ENCODE measurements at regions of chr3 and their contacts with region 1.

Region 1: GRCh38 chr3:58491506-58492402 is at the start of gene KCTD6:
- DNase-seq: peak; percentile 93 to 95 (median 95)
- H3K4me3 ChIP-seq: peak within 1 kb of the TSS; percentile 69 to 92 (median 90)
- H3K4me3 Mint-ChIP-seq: peak within 1 kb of the TSS; percentile 94 to 99
- H3K27ac ChIP-seq: peak within 1 kb of the TSS; percentile 47 to 85
- H3K27ac Mint-ChIP-seq: peak within 1 kb of the TSS; percentile 88 to 98 (median 92)
- H3K4me1 ChIP-seq: peaks cover 41 to 66% of the 10 kb centered on the region in 2 donors
- H3K4me1 Mint-ChIP-seq: peaks cover 74% of the 10 kb centered on the region
- H3K27me3 ChIP-seq: no peaks in the 10 kb centered on the region
- H3K27me3 Mint-ChIP-seq: peaks cover 0 to 1% (median 1%) of the 10 kb centered on the region in 3 donors
- CTCF ChIP-seq: peak; percentile 60
- polyA plus RNA-seq, gene KCTD6: 11.3 to 18.9 (median 11.9) TPM

Region 2: GRCh38 chr3:58414538-58415197 is 77.1 kb before region 1 on chr3:
- intact Hi-C with region 1: no loop called
- DNase-seq: peak; percentile 46 to 58 (median 47)
- H3K4me3 ChIP-seq: no peak overlapping the region
- H3K4me3 Mint-ChIP-seq: no peak overlapping the region
- H3K27ac ChIP-seq: peak overlapping the region in 1 of 2 donors; percentile 53
- H3K27ac Mint-ChIP-seq: peak overlapping the region in 2 of 7 donors; percentile 3 to 82
- H3K4me1 ChIP-seq: peaks cover 0 to 3% of the 10 kb centered on the region in 2 donors
- H3K4me1 Mint-ChIP-seq: peaks cover 11% of the 10 kb centered on the region
- H3K27me3 ChIP-seq: no peaks in the 10 kb centered on the region
- H3K27me3 Mint-ChIP-seq: peaks cover 0 to 1% (median 0%) of the 10 kb centered on the region in 3 donors
- CTCF ChIP-seq: peak; percentile 74

Region 3: DNA sequence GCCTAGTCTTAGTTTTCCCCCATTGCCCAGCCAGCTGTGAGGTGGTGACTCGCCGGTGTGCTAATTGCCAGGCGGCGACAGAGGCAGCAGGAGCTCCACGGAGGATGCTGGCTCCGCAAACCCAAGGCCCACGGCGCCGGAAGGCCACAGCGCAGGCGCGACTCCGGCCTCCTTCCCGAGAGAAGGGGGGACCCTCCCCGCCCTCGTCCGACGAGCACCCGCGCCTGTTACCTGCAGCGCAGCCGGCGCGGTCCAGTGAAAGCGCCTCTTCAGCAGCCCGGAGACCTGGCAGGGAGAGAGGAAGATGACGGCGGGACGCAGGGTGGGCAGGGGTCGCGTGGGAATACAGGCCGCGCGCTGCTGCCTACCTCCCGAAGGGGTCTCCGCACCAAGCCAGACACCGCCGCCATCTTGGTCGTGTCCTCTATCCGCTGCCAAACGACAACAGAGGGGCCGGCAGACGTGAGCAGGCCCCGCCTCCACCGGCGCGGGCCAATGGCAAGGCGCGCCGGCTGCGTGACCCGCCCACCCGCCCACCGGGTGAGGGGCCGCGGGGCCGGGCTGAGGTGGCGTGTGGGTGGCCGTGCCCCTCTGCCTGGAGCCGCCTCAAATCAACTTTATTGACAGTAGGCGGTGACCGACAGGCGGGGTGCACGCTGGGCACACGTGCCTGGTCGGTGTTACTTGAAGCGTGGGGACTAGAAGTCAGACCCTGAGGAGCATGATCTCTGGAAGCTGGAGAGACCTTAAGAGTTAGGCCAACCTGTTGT is 58.2 kb before region 1 on chr3 and contains the start of gene PDHB:
- intact Hi-C with region 1: loop called in 1 of 2 experiments (anchors 5 kb)
- DNase-seq: peak; percentile 82 to 84 (median 84)
- H3K4me3 ChIP-seq: peak within 1 kb of the TSS; percentile 93 to 98 (median 96)
- H3K4me3 Mint-ChIP-seq: peak within 1 kb of the TSS; percentile 88 to 94
- H3K27ac ChIP-seq: peak within 1 kb of the TSS; percentile 74 to 91
- H3K27ac Mint-ChIP-seq: peak within 1 kb of the TSS; percentile 87 to 96 (median 94)
- H3K4me1 ChIP-seq: peaks cover 15 to 18% of the 10 kb centered on the region in 2 donors
- H3K4me1 Mint-ChIP-seq: peaks cover 19% of the 10 kb centered on the region
- H3K27me3 ChIP-seq: no peaks in the 10 kb centered on the region
- H3K27me3 Mint-ChIP-seq: peaks cover 0 to 1% (median 0%) of the 10 kb centered on the region in 3 donors
- CTCF ChIP-seq: no peak
- polyA plus RNA-seq, gene PDHB: 30.5 to 125 (median 112) TPM

Region 4: DNA sequence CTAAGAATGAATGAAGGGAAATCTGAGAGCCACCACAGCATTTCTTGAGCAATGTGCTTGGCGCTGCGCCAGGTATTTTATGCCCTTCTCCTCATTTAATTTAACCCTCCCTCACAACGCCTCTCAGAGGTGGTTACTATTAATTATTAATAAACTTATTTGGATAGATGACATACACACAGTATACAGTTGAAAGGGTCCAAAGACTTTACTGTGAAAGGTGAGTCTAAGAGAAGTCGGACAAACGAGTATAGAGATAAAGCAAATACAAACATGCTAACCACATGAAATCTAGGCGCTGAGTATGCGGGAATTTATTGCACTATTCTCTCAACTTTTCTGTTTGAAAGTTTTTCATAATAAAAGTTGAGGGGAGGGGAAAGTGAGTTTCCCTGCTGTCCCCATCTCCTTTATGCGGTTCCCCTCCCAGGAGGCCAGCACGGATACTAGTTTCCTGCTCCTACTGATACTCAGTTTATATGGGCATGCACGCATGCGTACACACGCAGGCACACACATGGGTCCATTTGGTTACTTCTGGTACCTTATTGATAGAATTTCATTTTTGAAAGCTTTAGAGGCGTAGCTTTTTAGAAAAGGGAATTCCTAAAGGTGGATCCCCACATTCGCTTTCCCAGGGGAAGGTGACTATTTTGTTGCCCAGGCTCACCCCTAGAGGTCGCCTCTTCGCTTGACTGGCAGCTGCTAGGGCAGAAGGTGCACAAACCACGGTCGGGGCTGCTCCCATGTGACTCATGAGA is 28.4 kb before region 1 on chr3:
- intact Hi-C with region 1: loop called in 1 of 2 experiments (anchors 5 kb)
- DNase-seq: peak; percentile 74 to 87 (median 81)
- H3K4me3 ChIP-seq: peak overlapping the region in 2 of 3 experiments; percentile 12 to 55
- H3K4me3 Mint-ChIP-seq: peak overlapping the region; percentile 66 to 81
- H3K27ac ChIP-seq: no peak overlapping the region
- H3K27ac Mint-ChIP-seq: peak overlapping the region in 4 of 7 donors; percentile 21 to 85 (median 38)
- H3K4me1 ChIP-seq: peaks cover 14 to 17% of the 10 kb centered on the region in 2 donors
- H3K4me1 Mint-ChIP-seq: peaks cover 16% of the 10 kb centered on the region
- H3K27me3 ChIP-seq: no peaks in the 10 kb centered on the region
- H3K27me3 Mint-ChIP-seq: peaks cover 0 to 5% (median 0%) of the 10 kb centered on the region in 3 donors
- CTCF ChIP-seq: peak; percentile 97

Region 5: GRCh38 chr3:58473275-58473674 is 18.5 kb before region 1 on chr3:
- intact Hi-C with region 1: loop called in 1 of 2 experiments (anchors 2 kb)
- DNase-seq: no peak
- H3K4me3 ChIP-seq: peak overlapping the region in 1 of 3 experiments; percentile 77
- H3K4me3 Mint-ChIP-seq: peak overlapping the region in 1 of 2 donors; percentile 85
- H3K27ac ChIP-seq: peak overlapping the region; percentile 94 to 96
- H3K27ac Mint-ChIP-seq: peak overlapping the region; percentile 87 to 99 (median 95)
- H3K4me1 ChIP-seq: peaks cover 90 to 96% of the 10 kb centered on the region in 2 donors
- H3K4me1 Mint-ChIP-seq: peaks cover 75% of the 10 kb centered on the region
- H3K27me3 ChIP-seq: no peaks in the 10 kb centered on the region
- H3K27me3 Mint-ChIP-seq: peaks cover 0 to 7% (median 1%) of the 10 kb centered on the region in 3 donors
- CTCF ChIP-seq: no peak

Region 6: GRCh38 chr3:58526515-58526957 is 34.8 kb after region 1 on chr3:
- intact Hi-C with region 1: loop called (anchors 5 kb)
- DNase-seq: peak; percentile 86 to 91 (median 89)
- H3K4me3 ChIP-seq: peak overlapping the region in 1 of 3 experiments; percentile 50
- H3K4me3 Mint-ChIP-seq: peak overlapping the region in 1 of 2 donors; percentile 21
- H3K27ac ChIP-seq: peak overlapping the region; percentile 59 to 83
- H3K27ac Mint-ChIP-seq: peak overlapping the region; percentile 80 to 99 (median 97)
- H3K4me1 ChIP-seq: peaks cover 21 to 36% of the 10 kb centered on the region in 2 donors
- H3K4me1 Mint-ChIP-seq: peaks cover 32% of the 10 kb centered on the region
- H3K27me3 ChIP-seq: no peaks in the 10 kb centered on the region
- H3K27me3 Mint-ChIP-seq: peaks cover 0 to 5% (median 2%) of the 10 kb centered on the region in 3 donors
- CTCF ChIP-seq: no peak